Activated T-helper 1 cell treated with anti-CD3 and anti-CD28 coated beads, Interleukin-12 subunit alpha, Interleukin-12 subunit beta, Interleukin-2, Interleukin-4 antibody, amounts not matched to agents 30 ng/mL and 10 ng/mL and 1 ng/mL, durations not matched to agents 14 hours and 24 hours and 36 hours (primary cell): ENCODE measurements at regions of chr19 and their contacts with region 1.

Region 1: GRCh38 chr19:55385740-55386529 is at the start of gene RPL28:
- DNase-seq: peak; percentile 99
- H3K4me3 Mint-ChIP-seq: peak within 1 kb of the TSS; percentile 99
- H3K27ac Mint-ChIP-seq: peak within 1 kb of the TSS; percentile 96
- H3K4me1 Mint-ChIP-seq: peaks cover 43% of the 10 kb centered on the region
- H3K27me3 Mint-ChIP-seq: no peaks in the 10 kb centered on the region
- total RNA-seq, gene RPL28: 1,835 and 1,847 TPM in 2 replicates

Region 2: DNA sequence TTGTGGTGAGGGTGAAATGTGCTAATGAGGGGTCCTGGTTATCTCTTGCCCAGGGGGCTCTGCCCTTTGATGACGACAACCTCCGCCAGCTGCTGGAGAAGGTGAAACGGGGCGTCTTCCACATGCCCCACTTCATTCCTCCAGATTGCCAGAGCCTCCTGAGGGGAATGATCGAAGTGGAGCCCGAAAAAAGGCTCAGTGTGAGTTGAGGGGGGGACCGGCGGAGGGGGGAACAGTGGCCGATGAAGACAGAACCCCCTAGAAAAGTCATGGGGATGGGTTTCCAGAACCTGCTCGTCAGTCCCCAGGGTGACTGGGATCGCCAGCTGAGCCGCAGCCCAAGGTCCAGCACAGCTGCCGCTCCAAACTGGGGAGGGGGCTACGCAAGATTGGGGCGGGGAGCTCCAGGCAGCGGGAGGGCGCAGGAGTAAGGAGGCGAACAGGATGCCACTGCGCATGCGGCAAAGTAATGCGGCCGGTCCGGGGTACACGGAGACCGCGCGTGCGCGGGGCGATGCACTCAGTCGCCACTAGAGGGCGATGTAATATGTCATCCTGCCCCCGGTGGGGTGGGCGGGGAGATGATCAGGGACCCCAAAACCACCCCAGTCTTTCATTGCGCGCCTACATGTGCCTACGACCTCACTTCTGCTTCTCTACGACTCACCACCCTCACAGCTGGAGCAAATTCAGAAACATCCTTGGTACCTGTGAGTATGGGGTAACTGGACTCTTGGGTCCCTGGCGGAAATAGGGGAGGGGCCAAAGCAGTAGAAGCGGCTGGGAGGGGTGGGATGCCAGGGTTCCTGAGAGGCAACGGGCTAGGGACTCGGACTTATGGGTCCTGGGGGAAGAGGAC is 84.2 kb before region 1 on chr19:
- intact Hi-C with region 1: loop called (anchors 1 kb)
- DNase-seq: peak; percentile 91
- H3K4me3 Mint-ChIP-seq: peak overlapping the region; percentile 88
- H3K27ac Mint-ChIP-seq: peak overlapping the region; percentile 88
- H3K4me1 Mint-ChIP-seq: peaks cover 17% of the 10 kb centered on the region
- H3K27me3 Mint-ChIP-seq: no peaks in the 10 kb centered on the region

Region 3: GRCh38 chr19:55353803-55354697 is 31.9 kb before region 1 on chr19:
- intact Hi-C with region 1: loop called (anchors 1 kb)
- DNase-seq: peak; percentile 45
- H3K4me3 Mint-ChIP-seq: peak overlapping the region; percentile 82
- H3K27ac Mint-ChIP-seq: no peak overlapping the region
- H3K4me1 Mint-ChIP-seq: peaks cover 26% of the 10 kb centered on the region
- H3K27me3 Mint-ChIP-seq: peaks cover 44% of the 10 kb centered on the region